SK-N-SH (cell line): ENCODE measurements at regions of chr1 and their contacts with region 1.

Region 1: GRCh38 chr1:110619412-110620249 is 13.5 kb upstream of the KCNA2 start:
- DNase-seq: peak; percentile 88
- H3K4me3 ChIP-seq: peak overlapping the region in 1 of 2 experiments; percentile 25; a peak in 1 of 4 replicates
- H3K27ac ChIP-seq: no peak overlapping the region
- H3K4me1 ChIP-seq: peaks cover 0 to 3% of the 10 kb centered on the region in 2 experiments; a peak in 1 of 4 replicates
- H3K27me3 ChIP-seq: peaks cover 11% of the 10 kb centered on the region
- CTCF ChIP-seq: peak; percentile 92
- EP300 ChIP-seq: no peak
- RAD21 ChIP-seq: peak; percentile 73

Region 2: DNA sequence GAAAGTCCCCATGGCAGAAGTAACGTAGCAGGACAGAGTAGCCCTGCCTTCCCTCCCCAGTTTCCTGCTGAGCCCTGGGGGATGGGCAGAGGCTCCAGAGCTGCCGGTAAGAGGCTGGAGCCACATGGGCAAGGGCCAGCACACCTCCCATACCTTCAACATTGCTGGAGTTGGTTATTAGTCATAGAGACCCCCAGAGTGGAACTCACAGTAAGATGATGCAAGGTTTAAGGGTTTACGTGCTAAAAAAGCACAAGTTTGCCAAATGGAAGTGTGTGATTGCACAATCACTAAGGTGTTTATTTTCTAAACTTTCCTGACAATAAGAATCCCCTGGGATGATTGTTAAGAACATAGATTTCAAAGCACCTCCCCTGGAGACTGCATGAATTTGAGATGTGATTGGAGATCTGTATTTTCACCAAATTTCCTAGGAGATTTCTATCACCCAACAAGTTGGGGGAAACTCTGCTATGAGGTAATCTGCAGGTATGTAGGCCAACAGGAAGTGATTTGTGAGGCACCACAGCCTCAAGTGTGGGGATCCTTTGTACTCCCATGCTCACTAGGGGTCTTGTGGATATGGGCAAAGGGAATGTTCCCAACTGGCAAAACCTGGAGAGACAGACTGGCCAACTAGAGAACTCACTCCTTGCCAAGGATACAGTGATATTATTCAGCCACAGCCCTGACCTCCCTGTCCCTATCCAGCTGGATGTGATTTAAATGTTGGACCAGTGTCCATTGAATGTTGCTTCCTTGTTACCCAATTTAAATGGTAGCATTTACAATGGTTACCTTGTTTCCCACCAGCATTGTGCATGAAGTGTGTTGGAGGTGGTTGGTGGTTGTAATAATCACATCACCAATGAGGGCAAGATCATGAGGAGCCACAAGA is 746.1 kb before region 1 on chr1:
- CTCF ChIA-PET with region 1: no interaction called
- POLR2A ChIA-PET with region 1: no interaction called
- DNase-seq: no peak
- H3K4me3 ChIP-seq: no peak overlapping the region
- H3K27ac ChIP-seq: 0 out of 4 replicates have a peak overlapping the region, but pooled peaks of 1 of the 2 experiments have one; percentile 69
- H3K4me1 ChIP-seq: peaks cover 4 to 28% of the 10 kb centered on the region in 2 experiments; a peak in 3 of 4 replicates
- H3K27me3 ChIP-seq: no peaks in the 10 kb centered on the region
- CTCF ChIP-seq: no peak
- EP300 ChIP-seq: no peak
- RAD21 ChIP-seq: no peak

Region 3: GRCh38 chr1:110535985-110536384 is 83.6 kb before region 1 on chr1:
- CTCF ChIA-PET with region 1: interaction called, 16 read pairs
- POLR2A ChIA-PET with region 1: no interaction called
- DNase-seq: no peak
- H3K4me3 ChIP-seq: no peak overlapping the region
- H3K27ac ChIP-seq: no peak overlapping the region
- H3K4me1 ChIP-seq: no peaks in the 10 kb centered on the region; a peak in 1 of 4 replicates
- H3K27me3 ChIP-seq: no peaks in the 10 kb centered on the region
- CTCF ChIP-seq: no peak
- EP300 ChIP-seq: no peak
- RAD21 ChIP-seq: no peak

Region 4: DNA sequence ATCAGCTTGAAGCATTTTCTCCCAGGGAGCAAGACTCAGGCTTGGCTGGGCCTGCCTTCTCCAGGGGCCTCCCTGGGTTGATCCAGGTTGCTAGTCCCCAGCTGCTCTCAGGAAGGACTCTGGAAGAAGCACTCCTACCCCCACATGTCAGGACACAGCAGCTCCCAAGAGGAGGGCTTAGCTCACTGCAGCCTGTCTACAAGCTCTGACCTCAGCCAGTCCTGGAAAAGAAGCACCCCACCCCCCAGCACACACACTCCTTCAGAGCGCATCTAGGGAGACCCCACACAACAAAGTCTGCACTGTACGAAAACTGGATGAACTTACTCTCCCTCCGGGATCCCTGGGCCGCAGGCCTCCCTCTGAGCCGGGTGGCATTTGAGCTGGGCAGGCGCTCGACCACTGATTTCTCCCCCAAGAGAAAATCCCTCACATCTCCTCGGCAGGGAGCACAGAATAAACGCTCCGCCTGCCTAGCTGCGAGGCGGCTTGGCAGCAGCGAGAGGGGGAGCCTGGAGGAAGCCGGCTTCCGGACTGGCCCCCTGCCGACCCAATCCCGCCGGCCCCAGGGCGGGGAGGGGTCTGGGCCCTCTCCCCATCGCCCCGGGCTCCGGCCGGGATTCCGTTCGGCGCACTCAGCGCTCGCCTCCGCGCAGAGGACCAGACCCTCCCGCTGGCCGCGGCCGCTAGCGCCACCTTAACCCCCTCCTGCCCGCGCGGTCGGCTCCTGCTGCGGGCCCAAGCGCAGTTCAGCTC is 13.6 kb before region 1 on chr1 and contains the start of gene KCNA2:
- CTCF ChIA-PET with region 1: interaction called, 97 read pairs
- POLR2A ChIA-PET with region 1: no interaction called
- DNase-seq: peak; percentile 88
- H3K4me3 ChIP-seq: peak within 1 kb of the TSS; percentile 43 to 56
- H3K27ac ChIP-seq: no peak within 1 kb of the TSS
- H3K4me1 ChIP-seq: peaks cover 0 to 10% of the 10 kb centered on the region in 2 experiments; a peak in 2 of 4 replicates
- H3K27me3 ChIP-seq: peaks cover 60% of the 10 kb centered on the region
- CTCF ChIP-seq: no peak
- EP300 ChIP-seq: no peak
- RAD21 ChIP-seq: no peak
- polyA plus RNA-seq, gene KCNA2: not detected in 2 replicates

Region 5: GRCh38 chr1:110639724-110640386 is 20.2 kb after region 1 on chr1:
- CTCF ChIA-PET with region 1: interaction called, 14 read pairs
- POLR2A ChIA-PET with region 1: no interaction called
- DNase-seq: no peak
- H3K4me3 ChIP-seq: no peak overlapping the region
- H3K27ac ChIP-seq: no peak overlapping the region
- H3K4me1 ChIP-seq: no peaks in the 10 kb centered on the region; a peak in 1 of 4 replicates
- H3K27me3 ChIP-seq: 0 out of 2 replicates have a peak, but pooled peaks cover 6% of the 10 kb centered on the region
- CTCF ChIP-seq: no peak
- EP300 ChIP-seq: no peak
- RAD21 ChIP-seq: no peak

Region 6: GRCh38 chr1:110780600-110781484 is 161.2 kb after region 1 on chr1:
- CTCF ChIA-PET with region 1: interaction called, 280 read pairs
- POLR2A ChIA-PET with region 1: no interaction called
- DNase-seq: peak; percentile 69
- H3K4me3 ChIP-seq: no peak overlapping the region; a peak in 1 of 4 replicates
- H3K27ac ChIP-seq: no peak overlapping the region
- H3K4me1 ChIP-seq: no peaks in the 10 kb centered on the region; a peak in 1 of 4 replicates
- H3K27me3 ChIP-seq: no peaks in the 10 kb centered on the region; the same call in 1 of the 2 replicates
- CTCF ChIP-seq: peak; percentile 75
- EP300 ChIP-seq: no peak
- RAD21 ChIP-seq: peak; percentile 79